ENCODE measurements at regions of chr7 and their contacts with region 1.

Region 1: DNA sequence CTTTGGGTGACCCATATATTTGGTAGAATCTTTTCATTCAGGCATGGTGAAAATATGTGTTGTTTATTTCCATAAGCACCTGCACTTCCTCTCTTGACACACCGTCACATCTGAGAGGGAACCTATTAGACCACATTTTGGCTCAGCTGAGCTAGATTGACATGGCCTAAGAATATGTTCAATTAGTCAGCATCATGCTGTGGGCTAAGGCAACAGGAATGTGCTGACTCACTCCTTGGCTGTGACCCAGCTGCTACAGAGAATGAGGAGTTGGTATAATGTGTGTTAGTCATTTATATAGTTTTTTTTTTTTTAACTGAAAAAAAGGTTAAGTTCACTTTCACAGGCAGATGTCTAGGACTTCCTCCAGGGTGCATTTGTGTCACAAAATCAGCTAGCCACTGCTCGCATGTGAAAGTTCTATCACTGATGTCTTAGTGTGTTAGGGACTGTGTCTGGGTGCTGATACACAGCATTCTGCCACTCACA is 180.6 kb downstream of the SEMA3E start:
- DNase-seq: no peak
- H3K4me3 ChIP-seq: no peak overlapping the region
- H3K27ac ChIP-seq: no peak overlapping the region
- H3K4me1 ChIP-seq: peaks cover 0 to 11% (median 3%) of the 10 kb centered on the region in 4 experiments; a peak in 3 of 7 replicates
- H3K27me3 ChIP-seq: peaks cover 0 to 1% (median 0%) of the 10 kb centered on the region in 4 experiments; a peak in 1 of 7 replicates
- CTCF ChIP-seq: no peak
- EP300 ChIP-seq: no peak
- POLR2A ChIP-seq: peak; percentile 84 to 88
- RAD21 ChIP-seq: no peak

Region 2: GRCh38 chr7:83394776-83395175 is 73.5 kb before region 1 on chr7:
- CTCF ChIA-PET with region 1: no interaction called
- POLR2A ChIA-PET with region 1: no interaction called
- DNase-seq: no peak
- H3K4me3 ChIP-seq: no peak overlapping the region
- H3K27ac ChIP-seq: no peak overlapping the region
- H3K4me1 ChIP-seq: no peaks in the 10 kb centered on the region
- H3K27me3 ChIP-seq: no peaks in the 10 kb centered on the region
- CTCF ChIP-seq: no peak
- EP300 ChIP-seq: no peak
- POLR2A ChIP-seq: no peak
- RAD21 ChIP-seq: no peak

Region 3: GRCh38 chr7:83427929-83428328 is 40.4 kb before region 1 on chr7:
- CTCF ChIA-PET with region 1: interaction called, 10 read pairs
- POLR2A ChIA-PET with region 1: interaction called, 80 read pairs
- DNase-seq: no peak
- H3K4me3 ChIP-seq: peak overlapping the region in 1 of 4 experiments; percentile 22; a peak in 1 of 8 replicates
- H3K27ac ChIP-seq: no peak overlapping the region
- H3K4me1 ChIP-seq: peaks cover 0 to 17% (median 5%) of the 10 kb centered on the region in 4 experiments; a peak in 5 of 7 replicates
- H3K27me3 ChIP-seq: no peaks in the 10 kb centered on the region
- CTCF ChIP-seq: no peak
- EP300 ChIP-seq: no peak
- POLR2A ChIP-seq: no peak
- RAD21 ChIP-seq: no peak

Region 4: DNA sequence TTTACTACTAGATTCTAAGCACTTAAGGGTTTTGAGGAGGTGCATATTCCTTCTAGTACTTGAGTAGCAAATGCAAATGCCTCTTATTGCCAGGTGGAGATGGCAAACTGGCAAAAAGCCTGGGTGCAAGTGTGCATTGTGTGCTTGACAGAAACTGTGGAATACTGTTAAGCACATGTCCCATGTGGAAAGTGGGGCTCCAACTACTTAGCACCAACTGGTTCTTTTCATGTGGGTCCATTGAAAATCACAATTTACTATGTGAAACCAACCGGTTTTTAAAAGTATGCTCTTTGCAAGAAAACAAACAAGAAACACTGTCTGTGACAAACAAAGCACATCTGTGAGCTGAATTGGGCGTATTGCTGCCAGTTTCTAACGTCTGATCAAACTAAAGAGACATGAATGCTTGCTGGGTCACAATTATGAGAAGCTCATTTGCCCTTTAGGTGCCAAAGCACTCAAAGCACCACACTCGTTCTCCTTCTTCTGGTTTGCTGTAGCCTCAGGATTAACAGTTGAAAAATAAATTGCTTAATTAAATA is 16.7 kb before region 1 on chr7:
- CTCF ChIA-PET with region 1: no interaction called
- POLR2A ChIA-PET with region 1: interaction called, 135 read pairs
- DNase-seq: no peak
- H3K4me3 ChIP-seq: no peak overlapping the region
- H3K27ac ChIP-seq: no peak overlapping the region
- H3K4me1 ChIP-seq: peaks cover 0 to 30% (median 14%) of the 10 kb centered on the region in 4 experiments; a peak in 5 of 7 replicates
- H3K27me3 ChIP-seq: no peaks in the 10 kb centered on the region
- CTCF ChIP-seq: no peak
- EP300 ChIP-seq: no peak
- POLR2A ChIP-seq: no peak
- RAD21 ChIP-seq: no peak

Region 5: GRCh38 chr7:83457022-83457892 is 11.0 kb before region 1 on chr7:
- CTCF ChIA-PET with region 1: no interaction called
- POLR2A ChIA-PET with region 1: interaction called, 135 read pairs
- DNase-seq: no peak
- H3K4me3 ChIP-seq: peak overlapping the region in 2 of 4 experiments; percentile 4 to 21; a peak in 2 of 8 replicates
- H3K27ac ChIP-seq: no peak overlapping the region
- H3K4me1 ChIP-seq: peaks cover 0 to 22% (median 10%) of the 10 kb centered on the region in 4 experiments; a peak in 5 of 7 replicates
- H3K27me3 ChIP-seq: no peaks in the 10 kb centered on the region
- CTCF ChIP-seq: no peak
- EP300 ChIP-seq: no peak
- POLR2A ChIP-seq: no peak
- RAD21 ChIP-seq: no peak